HepG2 (cell line): ENCODE measurements at regions of chr17 and their contacts with region 1.

Region 1: GRCh38 chr17:55458977-55459376 is 37.3 kb upstream of the MMD start:
- DNase-seq: no peak
- ATAC-seq: no peak
- H3K4me3 ChIP-seq: no peak overlapping the region
- H3K27ac ChIP-seq: no peak overlapping the region
- H3K4me1 ChIP-seq: peaks cover 42% of the 10 kb centered on the region
- H3K27me3 ChIP-seq: no peaks in the 10 kb centered on the region
- CTCF ChIP-seq: no peak
- EP300 ChIP-seq: no peak; a peak in 1 of 4 replicates
- POLR2A ChIP-seq: no peak
- RAD21 ChIP-seq: no peak

Region 2: GRCh38 chr17:55496094-55496881 is 37.3 kb after region 1 on chr17:
- CTCF ChIA-PET with region 1: no interaction called
- POLR2A ChIA-PET with region 1: no interaction called
- in situ Hi-C with region 1: no loop called
- intact Hi-C with region 1: loop called (anchors 5 kb)
- DNase-seq: peak; percentile 28
- ATAC-seq: no peak
- H3K4me3 ChIP-seq: no peak overlapping the region
- H3K27ac ChIP-seq: no peak overlapping the region
- H3K4me1 ChIP-seq: peaks cover 42% of the 10 kb centered on the region
- H3K27me3 ChIP-seq: no peaks in the 10 kb centered on the region
- CTCF ChIP-seq: 0 out of 2 replicates have a peak, but pooled peaks have one; percentile 3
- EP300 ChIP-seq: no peak
- POLR2A ChIP-seq: no peak
- RAD21 ChIP-seq: no peak